ENCODE measurements at regions of chr2 and their contacts with region 1.

Region 1: GRCh38 chr2:119929537-119929936 is 83.3 kb upstream of the EPB41L5 start:
- DNase-seq: peak; percentile 67
- ATAC-seq: peak; percentile 88
- H3K4me3 Mint-ChIP-seq: peak overlapping the region; percentile 75
- H3K27ac Mint-ChIP-seq: peak overlapping the region; percentile 93
- H3K4me1 Mint-ChIP-seq: peaks cover 55% of the 10 kb centered on the region
- H3K27me3 Mint-ChIP-seq: no peaks in the 10 kb centered on the region

Region 2: DNA sequence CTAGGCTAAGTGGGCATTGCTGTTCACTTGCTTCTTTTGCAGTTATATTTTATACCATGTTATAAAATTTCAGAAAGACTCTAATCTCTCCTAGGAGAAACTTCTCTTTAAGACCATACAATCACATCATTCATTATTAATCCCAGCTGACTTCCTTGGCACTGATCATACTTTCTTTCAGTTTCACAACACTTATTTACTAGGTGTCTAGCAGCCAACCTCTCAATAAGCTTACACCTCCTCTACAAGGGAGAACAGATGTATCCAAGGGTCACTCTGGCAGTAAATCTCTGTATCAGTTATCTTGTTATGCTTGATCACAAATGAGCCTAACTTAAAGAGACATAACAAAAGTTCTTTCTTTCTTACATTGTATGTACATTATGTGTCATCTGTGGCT is 13.5 kb after region 1 on chr2:
- CTCF ChIA-PET with region 1: interaction called, 30 read pairs
- POLR2A ChIA-PET with region 1: interaction called, 5 read pairs
- DNase-seq: no peak
- ATAC-seq: no peak
- H3K4me3 Mint-ChIP-seq: no peak overlapping the region
- H3K27ac Mint-ChIP-seq: peak overlapping the region; percentile 19
- H3K4me1 Mint-ChIP-seq: peaks cover 23% of the 10 kb centered on the region
- H3K27me3 Mint-ChIP-seq: no peaks in the 10 kb centered on the region

Measured in activated CD8-positive, alpha-beta T cell treated with anti-CD3 and anti-CD28 coated beads, Interleukin-2, amount 10 ng/mL, durations not matched to agents 7 days and 5 days (primary cell).